ENCODE measurements at regions of chr19 and their contacts with region 1.

Region 1: DNA sequence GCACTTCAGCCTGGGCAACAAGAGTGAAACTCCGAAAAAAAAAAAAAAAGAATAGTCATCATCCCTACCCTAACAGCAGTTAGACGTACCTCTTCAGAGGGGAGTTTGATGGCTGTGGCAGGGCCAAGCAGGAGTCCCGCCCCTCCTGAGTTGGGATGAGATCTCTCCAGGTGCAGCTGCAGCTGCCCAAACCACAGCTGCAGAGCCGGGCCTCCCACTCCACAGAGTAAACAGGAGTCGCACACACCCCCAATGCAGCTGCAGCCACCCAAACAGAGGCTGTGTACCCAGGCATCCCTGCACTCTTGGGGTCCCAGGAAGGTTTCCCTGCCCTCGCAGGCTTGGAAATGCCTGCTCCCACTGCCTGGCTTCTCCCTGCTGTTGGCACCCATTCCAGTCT is 17.4 kb upstream of the MLLT1 start:
- DNase-seq: no peak
- ATAC-seq: no peak
- H3K4me3 ChIP-seq: no peak overlapping the region
- H3K27ac ChIP-seq: no peak overlapping the region
- H3K4me1 ChIP-seq: no peaks in the 10 kb centered on the region
- H3K27me3 ChIP-seq: 0 out of 5 replicates have a peak, but pooled peaks cover 0 to 4% of the 10 kb centered on the region in 2 experiments
- CTCF ChIP-seq: no peak
- EP300 ChIP-seq: no peak
- POLR2A ChIP-seq: no peak
- RAD21 ChIP-seq: no peak

Region 2: DNA sequence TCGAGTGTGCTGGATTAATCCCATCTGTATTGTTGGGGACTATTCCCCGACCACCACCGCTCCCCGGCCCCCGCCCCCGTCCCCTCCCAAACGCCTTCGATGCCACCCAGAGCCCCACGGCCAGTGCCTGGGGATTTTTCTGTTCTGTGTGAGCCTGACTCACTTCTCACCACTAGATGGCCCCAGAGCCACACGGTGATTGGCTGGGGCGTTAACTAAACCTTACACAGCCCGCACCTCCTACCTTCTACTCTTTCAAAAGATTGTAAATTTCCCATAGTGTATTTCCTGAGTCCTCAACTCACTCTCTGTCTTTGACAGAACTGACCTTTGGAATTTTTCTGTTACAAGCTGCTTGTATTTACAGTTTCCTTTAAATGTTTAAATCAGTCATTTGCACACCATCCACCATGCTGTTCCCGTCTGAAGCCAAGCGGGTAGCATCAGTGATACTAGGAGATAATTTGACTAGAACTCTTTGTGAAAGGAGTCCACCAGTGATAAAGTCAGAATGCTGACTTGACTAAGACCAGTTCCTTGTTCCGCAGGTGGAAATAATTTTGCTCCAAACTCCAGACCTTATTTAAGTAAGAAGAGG is 248.3 kb before region 1 on chr19:
- CTCF ChIA-PET with region 1: interaction called, 5 read pairs
- POLR2A ChIA-PET with region 1: no interaction called
- in situ Hi-C with region 1: loop called (anchors 5 kb)
- intact Hi-C with region 1: loop called (anchors 2 kb)
- DNase-seq: peak; percentile 83 to 89 (median 85)
- ATAC-seq: peak; percentile 100
- H3K4me3 ChIP-seq: no peak overlapping the region
- H3K27ac ChIP-seq: no peak overlapping the region
- H3K4me1 ChIP-seq: peaks cover 4 to 9% of the 10 kb centered on the region in 2 experiments; a peak in 3 of 5 replicates
- H3K27me3 ChIP-seq: no peaks in the 10 kb centered on the region
- CTCF ChIP-seq: peak; percentile 76 to 93 (median 92)
- EP300 ChIP-seq: no peak
- POLR2A ChIP-seq: no peak
- RAD21 ChIP-seq: peak; percentile 84 to 96

Region 3: DNA sequence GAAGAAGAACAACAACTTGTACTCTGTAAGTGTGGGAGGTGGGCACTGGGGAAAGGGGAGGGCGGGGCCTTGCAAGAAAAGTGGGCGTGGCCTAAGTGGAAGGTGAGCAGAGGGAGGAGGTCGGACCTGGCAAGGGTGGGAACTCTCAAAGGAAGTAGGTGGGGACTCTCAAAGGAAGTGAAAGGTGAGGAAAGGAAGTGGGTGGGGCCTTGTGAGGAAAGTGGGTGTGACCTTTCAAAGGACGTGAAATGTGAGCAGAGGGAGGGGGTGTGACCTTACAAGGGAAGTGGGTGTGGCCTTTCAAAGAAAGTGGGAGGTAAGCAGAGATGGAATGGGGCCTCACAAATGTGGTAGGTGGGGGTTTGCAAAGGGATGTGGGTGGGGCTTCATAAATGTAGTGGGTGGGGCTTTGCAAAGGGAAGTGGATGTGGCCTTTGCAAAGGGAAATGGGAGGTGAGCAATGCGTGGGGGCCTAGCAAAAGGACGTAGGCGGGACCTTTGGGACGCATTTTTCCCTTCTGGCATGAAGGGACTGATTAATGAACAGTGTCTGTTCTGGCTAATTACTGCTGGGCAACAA is 135.8 kb before region 1 on chr19:
- CTCF ChIA-PET with region 1: interaction called, 6 read pairs
- POLR2A ChIA-PET with region 1: no interaction called
- in situ Hi-C with region 1: no loop called
- intact Hi-C with region 1: loop called (anchors 5 kb)
- DNase-seq: peak; percentile 89 to 95 (median 91)
- ATAC-seq: peak; percentile 95
- H3K4me3 ChIP-seq: no peak overlapping the region
- H3K27ac ChIP-seq: peak overlapping the region; percentile 38; the same call in 2 of the 3 replicates
- H3K4me1 ChIP-seq: peaks cover 0 to 6% of the 10 kb centered on the region in 2 experiments; a peak in 2 of 5 replicates
- H3K27me3 ChIP-seq: no peaks in the 10 kb centered on the region
- CTCF ChIP-seq: no peak
- EP300 ChIP-seq: no peak
- POLR2A ChIP-seq: no peak
- RAD21 ChIP-seq: no peak

Region 4: GRCh38 chr19:6218491-6219162 is 78.6 kb before region 1 on chr19:
- CTCF ChIA-PET with region 1: interaction called, 3 read pairs
- POLR2A ChIA-PET with region 1: interaction called, 3 read pairs
- in situ Hi-C with region 1: no loop called
- intact Hi-C with region 1: loop called (anchors 5 kb)
- DNase-seq: peak; percentile 87 to 92 (median 90)
- ATAC-seq: peak; percentile 92
- H3K4me3 ChIP-seq: no peak overlapping the region
- H3K27ac ChIP-seq: no peak overlapping the region; the same call in 2 of the 3 replicates
- H3K4me1 ChIP-seq: peaks cover 15 to 80% of the 10 kb centered on the region in 2 experiments
- H3K27me3 ChIP-seq: no peaks in the 10 kb centered on the region
- CTCF ChIP-seq: peak; percentile 86 to 95 (median 88)
- EP300 ChIP-seq: no peak
- POLR2A ChIP-seq: no peak
- RAD21 ChIP-seq: peak; percentile 75 to 85

Region 5: GRCh38 chr19:6372594-6373095 is 75.4 kb after region 1 on chr19 and contains the start of gene ALKBH7:
- CTCF ChIA-PET with region 1: no interaction called
- POLR2A ChIA-PET with region 1: no interaction called
- in situ Hi-C with region 1: no loop called
- intact Hi-C with region 1: no loop called
- DNase-seq: peak; percentile 89 to 100 (median 92)
- ATAC-seq: peak; percentile 88
- H3K4me3 ChIP-seq: peak within 1 kb of the TSS; percentile 99
- H3K27ac ChIP-seq: peak within 1 kb of the TSS; percentile 97
- H3K4me1 ChIP-seq: peaks cover 8 to 62% of the 10 kb centered on the region in 2 experiments
- H3K27me3 ChIP-seq: no peaks in the 10 kb centered on the region
- CTCF ChIP-seq: no peak
- EP300 ChIP-seq: no peak
- POLR2A ChIP-seq: peak; percentile 84
- RAD21 ChIP-seq: peak in 1 of 2 experiments; percentile 7; a peak in 1 of 4 replicates
- polyA plus RNA-seq, gene ALKBH7: 0.69 to 2.8 TPM

Measured in K562 (cell line).